GM18951 (cell line): ENCODE measurements at regions of chr18 and their contacts with region 1.

Region 1: GRCh38 chr18:47772374-47773248 is 157.8 kb downstream of the SMAD2 start:
- POLR2A ChIP-seq: no peak

Region 2: GRCh38 chr18:47689371-47689770 is 83.2 kb before region 1 on chr18:
- in situ Hi-C with region 1: no loop called
- POLR2A ChIP-seq: no peak

Region 3: GRCh38 chr18:47979611-47980200 is 207.1 kb after region 1 on chr18:
- in situ Hi-C with region 1: no loop called
- POLR2A ChIP-seq: no peak

Region 4: GRCh38 chr18:47997338-47997780 is 224.7 kb after region 1 on chr18:
- in situ Hi-C with region 1: loop called (anchors 10 kb)
- POLR2A ChIP-seq: no peak